Activated CD4-positive, alpha-beta memory T cell treated with anti-CD3 and anti-CD28 coated beads for 36 hours (primary cell): ENCODE measurements at regions of chr6 and their contacts with region 1.

Region 1: DNA sequence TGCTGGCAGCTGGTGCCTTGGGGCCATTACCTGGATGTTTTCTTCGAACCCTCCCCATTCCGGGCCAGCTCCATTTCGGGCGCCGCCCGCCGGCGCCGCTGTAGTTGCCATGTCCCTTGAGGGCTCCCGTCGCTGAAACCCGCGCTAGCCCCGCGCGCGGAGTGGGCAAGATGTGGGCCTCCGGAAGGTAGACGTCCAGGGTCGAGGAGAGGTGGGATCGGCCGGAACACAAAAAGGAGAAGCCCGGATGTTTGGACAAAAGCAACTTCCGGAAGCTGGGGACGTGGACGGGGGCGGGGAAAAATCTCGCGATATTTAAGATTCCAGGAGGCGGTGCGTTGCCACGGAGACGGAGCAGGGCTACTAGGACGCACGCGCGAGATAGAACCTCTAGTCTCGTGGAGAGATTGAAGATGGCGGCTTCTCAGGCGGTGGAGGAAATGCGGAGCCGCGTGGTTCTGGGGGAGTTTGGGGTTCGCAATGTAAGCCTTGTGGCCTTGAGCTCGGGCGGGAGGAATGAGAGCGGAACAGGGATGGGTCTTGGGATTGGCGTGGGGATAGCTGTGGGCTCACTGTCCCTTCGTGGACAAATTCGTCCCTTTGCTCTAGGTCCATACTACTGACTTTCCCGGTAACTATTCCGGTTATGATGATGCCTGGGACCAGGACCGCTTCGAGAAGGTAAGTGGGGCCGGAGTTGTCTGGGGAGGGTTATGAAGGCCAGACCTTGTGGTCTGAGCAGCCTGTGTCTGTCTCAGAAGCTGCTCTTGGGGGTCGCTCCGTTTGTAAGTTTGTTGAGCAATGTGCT is at the starts of genes POLR1C and YIPF3:
- DNase-seq: peak; percentile 99
- H3K4me3 Mint-ChIP-seq: no peak within 1 kb of the TSS
- H3K27ac Mint-ChIP-seq: no peak within 1 kb of the TSS
- H3K4me1 Mint-ChIP-seq: peaks cover 25% of the 10 kb centered on the region
- H3K27me3 Mint-ChIP-seq: no peaks in the 10 kb centered on the region
- total RNA-seq, gene POLR1C: 46.8 to 49.5 TPM
- total RNA-seq, gene YIPF3: 38.3 to 39.3 TPM

Region 2: DNA sequence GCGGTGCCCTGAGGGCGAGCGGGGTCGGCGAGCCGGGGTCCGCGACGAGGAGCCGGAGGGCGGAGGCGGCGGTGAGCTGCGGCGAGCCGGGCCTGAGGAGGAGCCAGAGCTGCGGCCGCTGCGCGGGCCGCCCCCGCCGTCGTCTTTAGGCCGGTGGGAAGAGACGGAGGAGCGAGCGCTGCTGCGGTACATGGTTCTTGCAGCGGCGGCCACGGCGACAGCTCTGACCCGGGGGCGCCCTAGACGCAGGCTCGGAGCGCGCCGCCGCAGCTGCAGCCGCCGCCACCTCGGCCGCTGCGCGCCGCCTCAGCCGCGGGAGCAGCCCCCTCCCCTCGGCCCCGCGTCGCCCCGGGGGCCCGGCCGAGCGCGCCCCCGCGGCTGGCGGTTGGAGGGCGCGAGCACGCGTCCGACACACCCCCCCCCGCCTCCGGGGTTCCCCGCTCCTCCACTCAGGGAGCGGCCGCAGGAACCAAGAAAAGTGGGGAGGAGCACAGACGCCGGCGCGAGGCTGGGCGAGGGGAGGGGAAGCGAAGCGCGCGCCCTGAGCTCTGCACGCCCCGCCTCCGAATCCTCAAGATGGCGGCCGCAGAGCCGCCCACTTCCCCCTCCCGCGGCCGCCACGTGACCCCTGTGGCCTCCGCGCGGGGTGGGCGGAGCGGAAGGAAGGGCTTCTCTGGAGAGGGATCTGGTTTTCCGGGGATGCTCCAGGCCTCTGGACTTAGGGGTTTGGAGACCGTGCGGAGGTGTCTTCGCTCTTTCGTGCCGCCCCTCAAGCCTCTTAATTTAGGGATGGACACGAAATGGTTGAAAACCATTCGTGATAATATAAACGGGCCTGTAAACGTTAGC is 147.5 kb before region 1 on chr6 and contains the start of gene ZNF318:
- CTCF ChIA-PET with region 1: no interaction called
- POLR2A ChIA-PET with region 1: no interaction called
- intact Hi-C with region 1: loop called (anchors 5 kb)
- DNase-seq: peak; percentile 96
- H3K4me3 Mint-ChIP-seq: peak within 1 kb of the TSS; percentile 85
- H3K27ac Mint-ChIP-seq: peak within 1 kb of the TSS; percentile 91
- H3K4me1 Mint-ChIP-seq: peaks cover 30% of the 10 kb centered on the region
- H3K27me3 Mint-ChIP-seq: no peaks in the 10 kb centered on the region
- total RNA-seq, gene ZNF318: 12.1 to 12.7 TPM

Region 3: GRCh38 chr6:43489277-43490072 is 27.4 kb before region 1 on chr6:
- CTCF ChIA-PET with region 1: no interaction called
- POLR2A ChIA-PET with region 1: no interaction called
- intact Hi-C with region 1: no loop called
- DNase-seq: no peak
- H3K4me3 Mint-ChIP-seq: no peak overlapping the region
- H3K27ac Mint-ChIP-seq: no peak overlapping the region
- H3K4me1 Mint-ChIP-seq: peaks cover 14% of the 10 kb centered on the region
- H3K27me3 Mint-ChIP-seq: no peaks in the 10 kb centered on the region

Region 4: GRCh38 chr6:43570876-43571441 is 54.1 kb after region 1 on chr6:
- CTCF ChIA-PET with region 1: no interaction called
- POLR2A ChIA-PET with region 1: interaction called, 3 read pairs
- intact Hi-C with region 1: loop called (anchors 1 kb)
- DNase-seq: no peak
- H3K4me3 Mint-ChIP-seq: no peak overlapping the region
- H3K27ac Mint-ChIP-seq: peak overlapping the region; percentile 90
- H3K4me1 Mint-ChIP-seq: peaks cover 35% of the 10 kb centered on the region
- H3K27me3 Mint-ChIP-seq: no peaks in the 10 kb centered on the region